ENCODE measurements at regions of chr2 and their contacts with region 1.

Region 1: DNA sequence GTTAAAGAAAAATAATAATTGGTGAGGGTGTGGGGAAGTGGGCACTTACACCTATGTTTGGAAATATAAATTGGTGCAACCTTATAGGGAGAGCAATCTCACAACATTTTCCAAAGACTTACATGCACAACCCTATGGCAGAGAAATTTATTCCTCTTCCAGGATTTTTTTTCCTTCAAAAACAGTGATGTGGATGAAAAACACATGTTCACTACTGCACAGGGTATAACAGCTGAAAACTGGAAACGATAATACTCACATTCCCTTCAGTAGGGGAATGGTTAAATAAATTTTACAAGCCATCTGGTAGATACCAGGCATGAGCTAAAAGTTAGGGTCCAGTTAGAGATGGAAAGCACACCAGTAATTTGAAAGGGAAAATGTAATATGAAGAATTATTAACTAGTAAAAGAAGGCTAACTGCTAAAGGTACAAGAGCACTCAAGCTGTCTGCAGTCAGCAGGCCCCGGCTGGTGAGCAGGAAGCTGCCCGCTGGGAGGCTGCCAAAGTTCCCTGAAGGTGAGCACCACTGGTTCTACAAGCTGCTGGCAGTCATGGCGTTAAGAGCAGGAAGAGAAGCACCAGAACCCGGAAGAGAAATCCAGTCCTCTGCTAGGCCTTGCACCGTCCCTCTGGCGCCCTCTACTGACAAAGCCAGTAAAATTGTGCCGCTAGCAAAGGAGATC is 28.4 kb upstream of the CASP8 start:
- DNase-seq: peak; percentile 75 to 97 (median 88)
- ATAC-seq: peak; percentile 53 to 56 (median 54)
- H3K4me3 ChIP-seq: no peak overlapping the region
- H3K4me3 Mint-ChIP-seq: peak overlapping the region; percentile 57 to 94 (median 89)
- H3K27ac ChIP-seq: peak overlapping the region; percentile 81
- H3K27ac Mint-ChIP-seq: peak overlapping the region; percentile 72 to 93
- H3K4me1 ChIP-seq: peaks cover 40 to 43% of the 10 kb centered on the region in 2 experiments
- H3K4me1 Mint-ChIP-seq: peaks cover 44 to 60% (median 56%) of the 10 kb centered on the region in 3 donors
- H3K27me3 ChIP-seq: no peaks in the 10 kb centered on the region
- H3K27me3 Mint-ChIP-seq: no peaks in the 10 kb centered on the region

Region 2: GRCh38 chr2:200888704-200889625 is 343.0 kb before region 1 on chr2 and contains the starts of genes NIF3L1 and PPIL3:
- CTCF ChIA-PET with region 1: interaction called, 7 to 18 read pairs
- POLR2A ChIA-PET with region 1: interaction called in 1 of 2 experiments, 3 read pairs
- DNase-seq: peak; percentile 91 to 99 (median 96)
- ATAC-seq: peak; percentile 81 to 86 (median 82)
- H3K4me3 ChIP-seq: peak within 1 kb of the TSS; percentile 60 to 67
- H3K4me3 Mint-ChIP-seq: peak within 1 kb of the TSS; percentile 94 to 97 (median 96)
- H3K27ac ChIP-seq: peak within 1 kb of the TSS; percentile 89
- H3K27ac Mint-ChIP-seq: peak within 1 kb of the TSS; percentile 95 to 99
- H3K4me1 ChIP-seq: peaks cover 15 to 31% of the 10 kb centered on the region in 2 experiments
- H3K4me1 Mint-ChIP-seq: peaks cover 46 to 62% (median 55%) of the 10 kb centered on the region in 3 donors
- H3K27me3 ChIP-seq: no peaks in the 10 kb centered on the region
- H3K27me3 Mint-ChIP-seq: no peaks in the 10 kb centered on the region
- total RNA-seq, gene NIF3L1: 11.7 to 29.7 (median 25.0) TPM
- total RNA-seq, gene PPIL3: 28.0 to 44.2 (median 30.6) TPM

Region 3: GRCh38 chr2:201071479-201072200 is 160.3 kb before region 1 on chr2 and contains the starts of genes HYCC2 and NDUFB3:
- CTCF ChIA-PET with region 1: interaction called, 3 to 24 read pairs
- POLR2A ChIA-PET with region 1: no interaction called
- DNase-seq: peak; percentile 80 to 98 (median 92)
- ATAC-seq: peak; percentile 96 to 98 (median 96)
- H3K4me3 ChIP-seq: peak within 1 kb of the TSS; percentile 71 to 96
- H3K4me3 Mint-ChIP-seq: peak within 1 kb of the TSS; percentile 92 to 95 (median 94)
- H3K27ac ChIP-seq: peak within 1 kb of the TSS; percentile 65
- H3K27ac Mint-ChIP-seq: peak within 1 kb of the TSS; percentile 91 to 96
- H3K4me1 ChIP-seq: peaks cover 10 to 28% of the 10 kb centered on the region in 2 experiments
- H3K4me1 Mint-ChIP-seq: peaks cover 55 to 60% (median 58%) of the 10 kb centered on the region in 3 donors
- H3K27me3 ChIP-seq: no peaks in the 10 kb centered on the region
- H3K27me3 Mint-ChIP-seq: no peaks in the 10 kb centered on the region
- total RNA-seq, gene HYCC2: 29.5 to 44.6 (median 36.0) TPM
- total RNA-seq, gene NDUFB3: 31.4 to 43.7 (median 38.8) TPM

Region 4: DNA sequence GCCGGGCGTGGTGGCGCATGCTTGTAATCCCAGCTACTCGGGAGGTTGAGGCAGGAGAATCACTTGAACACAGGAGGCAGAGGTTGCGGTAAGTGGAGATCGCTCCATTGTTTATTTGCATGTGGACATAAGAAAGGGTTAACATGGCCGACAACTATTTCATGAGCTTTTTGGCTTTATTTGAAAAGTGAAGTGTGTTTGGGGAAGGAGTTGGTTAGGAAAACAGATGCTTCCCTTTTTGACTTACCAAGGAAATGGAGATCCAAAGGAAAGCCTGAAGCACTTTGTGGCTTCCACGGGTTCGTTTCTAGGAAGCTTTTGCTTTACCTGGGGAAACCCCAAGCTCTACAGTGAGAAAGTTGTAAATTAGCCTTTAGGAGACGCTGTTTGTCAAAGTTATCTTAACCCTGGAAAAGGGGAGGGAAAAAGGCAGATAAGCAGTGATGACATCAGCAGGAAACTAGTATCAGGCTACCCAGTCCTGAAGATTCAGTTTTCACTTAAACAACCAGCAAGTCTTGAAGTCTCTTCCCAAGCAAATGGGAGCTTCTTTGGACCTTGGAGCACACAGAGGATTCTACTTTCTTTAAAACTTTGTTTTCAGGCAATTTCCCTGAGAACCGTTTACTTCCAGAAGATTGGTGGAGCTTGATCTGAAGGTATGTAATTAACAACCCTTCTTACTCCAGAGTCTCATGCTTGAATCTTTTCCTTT is 49.1 kb before region 1 on chr2 and contains the start of gene CASP10:
- CTCF ChIA-PET with region 1: interaction called, 45 to 168 read pairs
- POLR2A ChIA-PET with region 1: interaction called, 4 to 16 read pairs
- DNase-seq: peak in 12 of 35 experiments; percentile 3 to 85 (median 23)
- ATAC-seq: peak; percentile 79 to 93 (median 88)
- H3K4me3 ChIP-seq: peak within 1 kb of the TSS; percentile 56 to 91
- H3K4me3 Mint-ChIP-seq: peak within 1 kb of the TSS; percentile 90 to 99 (median 95)
- H3K27ac ChIP-seq: peak within 1 kb of the TSS; percentile 48
- H3K27ac Mint-ChIP-seq: peak within 1 kb of the TSS; percentile 96
- H3K4me1 ChIP-seq: peaks cover 24 to 32% of the 10 kb centered on the region in 2 experiments
- H3K4me1 Mint-ChIP-seq: peaks cover 46 to 52% (median 48%) of the 10 kb centered on the region in 3 donors
- H3K27me3 ChIP-seq: no peaks in the 10 kb centered on the region
- H3K27me3 Mint-ChIP-seq: no peaks in the 10 kb centered on the region
- total RNA-seq, gene CASP10: 23.3 to 46.4 (median 29.2) TPM

Region 5: DNA sequence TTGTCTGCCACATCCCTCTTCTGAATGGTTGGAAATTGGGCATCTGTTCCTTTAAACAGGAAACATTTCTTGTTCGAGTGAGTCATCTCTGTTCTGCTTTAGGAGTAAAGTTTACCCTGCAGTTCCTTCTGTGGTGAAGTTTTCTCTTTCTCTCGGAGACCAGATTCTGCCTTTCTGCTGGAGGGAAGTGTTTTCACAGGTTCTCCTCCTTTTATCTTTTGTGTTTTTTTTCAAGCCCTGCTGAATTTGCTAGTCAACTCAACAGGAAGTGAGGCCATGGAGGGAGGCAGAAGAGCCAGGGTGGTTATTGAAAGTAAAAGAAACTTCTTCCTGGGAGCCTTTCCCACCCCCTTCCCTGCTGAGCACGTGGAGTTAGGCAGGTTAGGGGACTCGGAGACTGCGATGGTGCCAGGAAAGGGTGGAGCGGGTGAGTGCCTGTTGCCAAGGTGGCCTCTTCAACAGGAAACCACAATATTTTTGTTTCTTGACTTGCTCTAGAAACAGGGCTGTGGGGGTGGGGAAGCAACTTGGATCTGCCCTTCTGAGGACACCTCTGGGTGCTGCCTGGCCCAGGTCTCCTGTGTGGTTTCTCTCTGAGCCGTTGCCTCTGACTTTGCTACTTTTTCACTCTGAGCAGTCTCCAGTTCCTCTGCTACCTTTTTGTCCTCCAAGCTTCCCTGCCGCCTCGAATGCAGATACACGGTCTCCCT is 26.2 kb after region 1 on chr2:
- CTCF ChIA-PET with region 1: interaction called, 9 to 89 read pairs
- POLR2A ChIA-PET with region 1: interaction called in 1 of 2 experiments, 32 read pairs
- DNase-seq: peak; percentile 86 to 99 (median 97)
- ATAC-seq: peak; percentile 74 to 78 (median 76)
- H3K4me3 ChIP-seq: peak overlapping the region; percentile 55 to 72
- H3K4me3 Mint-ChIP-seq: peak overlapping the region; percentile 90 to 94 (median 92)
- H3K27ac ChIP-seq: peak overlapping the region; percentile 99
- H3K27ac Mint-ChIP-seq: peak overlapping the region; percentile 99
- H3K4me1 ChIP-seq: peaks cover 55 to 73% of the 10 kb centered on the region in 2 experiments
- H3K4me1 Mint-ChIP-seq: peaks cover 72 to 88% (median 77%) of the 10 kb centered on the region in 3 donors
- H3K27me3 ChIP-seq: no peaks in the 10 kb centered on the region
- H3K27me3 Mint-ChIP-seq: no peaks in the 10 kb centered on the region

Region 6: DNA sequence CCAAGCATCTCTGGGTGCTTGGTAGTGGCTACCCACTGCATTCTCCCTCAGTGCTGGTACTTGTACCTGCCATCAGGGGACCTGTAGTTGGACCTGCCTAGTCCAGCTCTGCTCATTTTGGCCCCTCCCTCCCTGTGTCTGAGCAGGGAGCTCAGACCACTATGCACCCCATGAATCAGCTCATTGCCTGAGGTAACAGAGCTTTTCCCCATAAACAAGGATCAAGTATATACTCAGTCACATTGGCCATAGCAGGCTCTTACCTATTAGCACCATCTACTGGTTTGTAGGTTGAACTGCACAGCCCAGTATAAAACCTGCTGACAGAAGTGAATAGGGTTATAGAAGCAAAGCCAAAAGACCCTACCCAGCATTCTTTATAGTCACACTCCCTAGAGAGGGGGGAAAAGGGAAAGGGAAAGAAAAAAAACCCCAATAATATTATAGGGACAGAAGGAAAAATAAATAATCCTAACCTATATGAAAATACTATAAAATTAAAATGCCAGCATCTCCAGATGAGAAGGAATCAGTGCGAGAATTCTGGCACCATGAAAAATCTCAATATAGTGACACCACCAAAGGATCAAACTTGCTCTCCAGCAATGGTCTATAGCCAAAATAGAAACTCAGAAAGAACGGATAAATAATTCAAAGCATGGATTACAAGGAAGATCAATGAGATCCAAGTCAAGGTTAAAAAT is 132.1 kb after region 1 on chr2:
- CTCF ChIA-PET with region 1: interaction called, 13 to 51 read pairs
- POLR2A ChIA-PET with region 1: interaction called in 1 of 2 experiments, 3 read pairs
- DNase-seq: peak in 19 of 35 experiments; percentile 9 to 72 (median 17)
- ATAC-seq: peak; percentile 87 to 93 (median 90)
- H3K4me3 ChIP-seq: no peak overlapping the region
- H3K4me3 Mint-ChIP-seq: peak overlapping the region in 1 of 3 donors; percentile 38
- H3K27ac ChIP-seq: no peak overlapping the region
- H3K27ac Mint-ChIP-seq: peak overlapping the region; percentile 72 to 80
- H3K4me1 ChIP-seq: peaks cover 11 to 25% of the 10 kb centered on the region in 2 experiments
- H3K4me1 Mint-ChIP-seq: peaks cover 32 to 42% (median 38%) of the 10 kb centered on the region in 3 donors
- H3K27me3 ChIP-seq: no peaks in the 10 kb centered on the region
- H3K27me3 Mint-ChIP-seq: no peaks in the 10 kb centered on the region

Region 7: GRCh38 chr2:202322435-202322834 is 1090.5 kb after region 1 on chr2:
- CTCF ChIA-PET with region 1: no interaction called
- POLR2A ChIA-PET with region 1: no interaction called
- DNase-seq: no peak
- ATAC-seq: no peak
- H3K4me3 ChIP-seq: no peak overlapping the region
- H3K4me3 Mint-ChIP-seq: no peak overlapping the region
- H3K27ac ChIP-seq: no peak overlapping the region
- H3K27ac Mint-ChIP-seq: no peak overlapping the region
- H3K4me1 ChIP-seq: no peaks in the 10 kb centered on the region
- H3K4me1 Mint-ChIP-seq: no peaks in the 10 kb centered on the region
- H3K27me3 ChIP-seq: no peaks in the 10 kb centered on the region
- H3K27me3 Mint-ChIP-seq: no peaks in the 10 kb centered on the region